SK-N-SH (cell line): ENCODE measurements at regions of chr7 and their contacts with region 1.

Region 1: GRCh38 chr7:31051598-31052486 is at the start of gene ADCYAP1R1:
- DNase-seq: peak; percentile 99
- H3K4me3 ChIP-seq: peak within 1 kb of the TSS; percentile 29 to 55; a peak in 3 of 4 replicates
- H3K27ac ChIP-seq: peak within 1 kb of the TSS in 1 of 2 experiments; percentile 59; a peak in 2 of 4 replicates
- H3K4me1 ChIP-seq: peaks cover 0 to 68% of the 10 kb centered on the region in 2 experiments; a peak in 2 of 4 replicates
- H3K27me3 ChIP-seq: peaks cover 48% of the 10 kb centered on the region
- CTCF ChIP-seq: no peak
- EP300 ChIP-seq: no peak
- RAD21 ChIP-seq: no peak
- polyA plus RNA-seq, gene ADCYAP1R1: 0.08 and 0.71 TPM in 2 replicates

Region 2: GRCh38 chr7:30504347-30505173 is 547.3 kb before region 1 on chr7 and contains the start of gene GGCT:
- CTCF ChIA-PET with region 1: no interaction called
- POLR2A ChIA-PET with region 1: no interaction called
- DNase-seq: peak; percentile 100
- H3K4me3 ChIP-seq: peak within 1 kb of the TSS; percentile 94 to 98
- H3K27ac ChIP-seq: peak within 1 kb of the TSS; percentile 51 to 93
- H3K4me1 ChIP-seq: peaks cover 0 to 20% of the 10 kb centered on the region in 2 experiments; a peak in 2 of 4 replicates
- H3K27me3 ChIP-seq: no peaks in the 10 kb centered on the region
- CTCF ChIP-seq: no peak
- EP300 ChIP-seq: no peak
- RAD21 ChIP-seq: peak; percentile 5; the same call in 1 of the 2 replicates
- polyA plus RNA-seq, gene GGCT: 20.8 and 21.8 TPM in 2 replicates

Region 3: GRCh38 chr7:31027161-31027965 is 24.5 kb before region 1 on chr7:
- CTCF ChIA-PET with region 1: interaction called, 15 read pairs
- POLR2A ChIA-PET with region 1: no interaction called
- DNase-seq: peak; percentile 79
- H3K4me3 ChIP-seq: no peak overlapping the region
- H3K27ac ChIP-seq: no peak overlapping the region
- H3K4me1 ChIP-seq: peaks cover 0 to 23% of the 10 kb centered on the region in 2 experiments; a peak in 2 of 4 replicates
- H3K27me3 ChIP-seq: peaks cover 17% of the 10 kb centered on the region
- CTCF ChIP-seq: no peak
- EP300 ChIP-seq: no peak
- RAD21 ChIP-seq: no peak

Region 4: DNA sequence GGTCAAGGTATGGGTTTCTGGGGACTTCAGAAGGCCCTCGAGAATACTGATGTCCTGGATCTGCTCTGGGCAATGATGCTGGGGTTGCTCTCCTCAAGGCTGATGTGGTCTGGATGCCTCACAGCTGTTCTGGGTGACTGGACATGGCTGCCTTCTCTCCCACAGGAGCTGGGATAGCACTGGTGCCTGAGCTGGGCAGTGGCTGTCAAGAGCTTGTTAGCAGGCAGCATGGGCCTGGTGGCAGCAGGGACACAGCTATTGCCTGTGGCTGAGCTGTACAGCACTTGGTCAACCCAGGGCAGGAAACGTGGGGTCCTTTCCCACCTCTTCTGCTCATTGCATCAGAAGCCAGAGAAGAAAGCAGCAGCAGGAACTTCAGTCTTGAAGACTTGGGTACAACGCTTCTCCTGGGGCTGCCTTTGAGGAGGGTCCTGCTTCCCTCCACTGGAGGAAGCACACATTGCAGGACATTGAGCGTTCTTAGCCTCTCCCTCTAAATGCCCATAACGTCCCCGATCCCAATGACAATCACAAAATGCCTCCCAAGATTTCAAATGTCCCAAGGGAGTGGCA is 13.3 kb after region 1 on chr7:
- CTCF ChIA-PET with region 1: interaction called, 28 read pairs
- POLR2A ChIA-PET with region 1: no interaction called
- DNase-seq: no peak
- H3K4me3 ChIP-seq: no peak overlapping the region
- H3K27ac ChIP-seq: no peak overlapping the region
- H3K4me1 ChIP-seq: peaks cover 0 to 9% of the 10 kb centered on the region in 2 experiments; a peak in 1 of 4 replicates
- H3K27me3 ChIP-seq: peaks cover 5% of the 10 kb centered on the region; the same call in 1 of the 2 replicates
- CTCF ChIP-seq: no peak
- EP300 ChIP-seq: no peak
- RAD21 ChIP-seq: no peak

Region 5: GRCh38 chr7:31082447-31082846 is 30.6 kb after region 1 on chr7:
- CTCF ChIA-PET with region 1: no interaction called
- POLR2A ChIA-PET with region 1: no interaction called
- DNase-seq: no peak
- H3K4me3 ChIP-seq: no peak overlapping the region
- H3K27ac ChIP-seq: no peak overlapping the region
- H3K4me1 ChIP-seq: no peaks in the 10 kb centered on the region; a peak in 1 of 4 replicates
- H3K27me3 ChIP-seq: peaks cover 33% of the 10 kb centered on the region; the same call in 1 of the 2 replicates
- CTCF ChIP-seq: no peak
- EP300 ChIP-seq: no peak
- RAD21 ChIP-seq: no peak

Region 6: GRCh38 chr7:31345421-31345820 is 293.6 kb after region 1 on chr7:
- CTCF ChIA-PET with region 1: no interaction called
- POLR2A ChIA-PET with region 1: no interaction called
- DNase-seq: no peak
- H3K4me3 ChIP-seq: no peak overlapping the region
- H3K27ac ChIP-seq: no peak overlapping the region
- H3K4me1 ChIP-seq: no peaks in the 10 kb centered on the region; a peak in 1 of 4 replicates
- H3K27me3 ChIP-seq: peaks cover 14% of the 10 kb centered on the region; the same call in 1 of the 2 replicates
- CTCF ChIP-seq: no peak
- EP300 ChIP-seq: no peak
- RAD21 ChIP-seq: no peak